ENCODE measurements at regions of chr5 and their contacts with region 1.

Region 1: DNA sequence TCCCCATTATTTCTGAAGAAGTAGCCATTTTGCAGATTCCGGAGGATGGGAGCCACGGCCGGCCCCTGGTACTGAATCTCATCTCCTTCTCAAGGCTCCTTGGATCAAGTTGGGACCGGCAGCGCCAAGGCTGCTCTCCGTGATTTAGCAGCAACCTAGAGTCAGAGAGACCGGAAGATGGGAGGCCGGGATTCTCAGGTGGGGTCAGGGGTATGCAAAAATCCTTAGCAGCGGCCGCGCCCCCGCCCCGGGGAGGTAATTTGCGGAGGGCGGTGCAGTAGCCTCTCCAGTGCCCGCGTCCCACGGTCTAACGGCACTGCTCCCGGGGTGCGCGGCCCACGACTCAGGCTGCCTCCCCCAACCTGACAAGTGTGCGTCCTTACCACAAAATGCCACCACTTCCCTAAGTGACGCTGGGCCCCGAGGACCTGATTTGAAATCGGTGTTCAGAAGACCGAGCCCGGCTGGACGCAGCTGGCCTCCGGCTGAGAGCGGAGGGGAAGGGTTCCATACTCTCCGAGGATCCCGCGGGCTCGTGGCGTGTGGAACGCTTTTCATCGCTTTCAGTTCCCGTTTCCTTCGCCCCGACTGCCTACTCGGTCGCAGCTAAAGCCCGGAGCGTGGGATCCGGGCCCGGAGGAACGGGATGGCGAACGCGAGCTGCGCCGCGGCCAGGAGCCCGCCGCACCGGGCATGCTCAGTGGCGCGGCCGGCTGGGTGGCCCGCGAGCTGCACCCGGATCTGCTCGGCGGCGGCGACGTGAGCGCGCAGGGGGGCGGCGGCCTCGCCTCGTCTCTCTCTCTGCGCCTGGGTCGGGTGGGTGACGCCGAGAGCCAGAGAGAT is at the start of gene SCAMP1:
- DNase-seq: peak; percentile 95
- CTCF ChIP-seq: peak; percentile 35

Region 2: GRCh38 chr5:78294248-78295034 is 65.6 kb before region 1 on chr5 and contains the start of gene AP3B1:
- in situ Hi-C with region 1: loop called (anchors 10 kb)
- DNase-seq: peak; percentile 98
- CTCF ChIP-seq: no peak

Measured in GM13976 (cell line).